ENCODE measurements at regions of chr10 and their contacts with region 1.

Region 1: DNA sequence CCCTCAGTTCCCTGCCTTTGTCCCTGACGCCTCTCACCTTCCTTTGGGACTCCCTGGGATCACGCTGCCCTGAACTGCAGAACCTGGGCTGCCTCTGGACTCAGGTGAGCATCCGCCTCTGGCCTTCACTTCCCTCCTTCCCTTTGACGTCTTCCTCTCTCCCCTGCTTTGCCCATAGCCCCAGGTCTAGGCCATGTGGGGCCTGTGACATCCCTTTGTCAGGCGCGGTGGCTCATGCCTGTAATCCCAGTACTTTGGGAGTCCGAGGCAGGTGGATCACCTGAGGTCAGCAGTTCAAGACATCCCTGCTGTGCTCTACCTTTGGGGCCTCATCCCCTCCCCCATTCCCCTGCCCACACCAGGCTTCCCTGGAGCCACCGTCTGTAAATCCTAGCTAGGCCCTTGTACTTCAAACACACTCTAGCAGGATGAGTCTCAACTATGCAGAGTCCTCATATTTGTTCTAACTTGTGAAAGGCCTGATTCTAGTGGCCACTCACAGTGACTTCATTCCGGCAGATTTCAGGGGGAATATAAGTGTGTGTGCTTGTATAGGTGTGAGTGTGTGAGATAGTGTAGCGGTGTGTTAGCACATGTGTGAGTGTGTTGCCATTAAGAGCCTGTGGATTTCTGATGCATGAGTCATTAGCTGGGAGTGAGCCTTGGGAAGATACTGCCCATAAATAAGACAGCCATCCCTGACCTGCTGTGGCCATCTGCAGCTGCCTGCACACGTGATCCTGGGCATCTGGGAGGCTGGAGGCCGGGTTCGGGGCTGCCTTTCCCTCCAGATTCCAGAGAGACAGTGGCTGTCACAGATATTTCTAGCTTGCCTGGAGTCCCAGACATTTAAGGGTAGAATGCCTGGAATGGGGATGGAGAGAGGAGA is 1.8 kb upstream of the NEURL1 start:
- DNase-seq: no peak
- H3K4me3 Mint-ChIP-seq: no peak overlapping the region
- H3K27ac Mint-ChIP-seq: no peak overlapping the region
- H3K4me1 Mint-ChIP-seq: peaks cover 23% of the 10 kb centered on the region
- H3K27me3 Mint-ChIP-seq: peaks cover 49% of the 10 kb centered on the region

Region 2: GRCh38 chr10:103416436-103417147 is 75.1 kb before region 1 on chr10:
- CTCF ChIA-PET with region 1: interaction called, 40 read pairs
- POLR2A ChIA-PET with region 1: no interaction called
- DNase-seq: peak; percentile 83
- H3K4me3 Mint-ChIP-seq: no peak overlapping the region
- H3K27ac Mint-ChIP-seq: no peak overlapping the region
- H3K4me1 Mint-ChIP-seq: peaks cover 5% of the 10 kb centered on the region
- H3K27me3 Mint-ChIP-seq: no peaks in the 10 kb centered on the region

Region 3: GRCh38 chr10:103463499-103463898 is 28.2 kb before region 1 on chr10:
- CTCF ChIA-PET with region 1: no interaction called
- POLR2A ChIA-PET with region 1: no interaction called
- DNase-seq: no peak
- H3K4me3 Mint-ChIP-seq: no peak overlapping the region
- H3K27ac Mint-ChIP-seq: no peak overlapping the region
- H3K4me1 Mint-ChIP-seq: peaks cover 48% of the 10 kb centered on the region
- H3K27me3 Mint-ChIP-seq: peaks cover 7% of the 10 kb centered on the region

Region 4: DNA sequence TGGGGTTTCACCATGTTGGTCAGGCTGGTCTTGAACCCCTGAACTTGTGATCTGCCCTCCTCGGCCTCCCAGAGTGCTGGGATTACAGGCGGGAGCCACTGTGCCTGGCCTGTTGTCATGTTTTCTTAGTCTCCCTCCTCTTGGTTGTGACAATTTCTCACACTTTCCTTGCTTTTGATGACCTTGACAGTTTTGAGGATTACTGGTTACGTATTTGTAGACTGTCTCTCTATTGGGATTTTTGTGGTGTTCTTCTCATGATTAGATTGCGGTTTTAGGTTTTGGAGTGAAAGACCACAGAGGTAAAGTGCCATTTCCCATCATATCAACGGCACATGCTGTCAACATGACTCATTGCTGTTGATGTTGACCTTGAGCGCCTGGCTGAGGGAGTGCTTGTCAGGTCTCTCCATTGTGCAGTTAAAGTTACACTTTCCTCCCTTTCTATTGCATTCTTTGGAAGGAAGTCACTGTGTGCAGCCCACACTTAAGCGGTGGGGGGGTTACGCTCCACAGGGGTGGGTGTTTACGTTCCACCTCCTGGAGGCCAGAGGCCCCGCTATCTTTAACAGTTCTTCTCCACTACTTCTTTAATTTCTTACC is 12.5 kb after region 1 on chr10:
- CTCF ChIA-PET with region 1: interaction called, 11 read pairs
- POLR2A ChIA-PET with region 1: no interaction called
- DNase-seq: peak; percentile 53
- H3K4me3 Mint-ChIP-seq: no peak overlapping the region
- H3K27ac Mint-ChIP-seq: no peak overlapping the region
- H3K4me1 Mint-ChIP-seq: peaks cover 20% of the 10 kb centered on the region
- H3K27me3 Mint-ChIP-seq: peaks cover 51% of the 10 kb centered on the region

Region 5: GRCh38 chr10:103542764-103543616 is 51.3 kb after region 1 on chr10:
- CTCF ChIA-PET with region 1: no interaction called
- POLR2A ChIA-PET with region 1: no interaction called
- DNase-seq: peak; percentile 43
- H3K4me3 Mint-ChIP-seq: peak overlapping the region; percentile 39
- H3K27ac Mint-ChIP-seq: no peak overlapping the region
- H3K4me1 Mint-ChIP-seq: peaks cover 13% of the 10 kb centered on the region
- H3K27me3 Mint-ChIP-seq: peaks cover 14% of the 10 kb centered on the region